Gastrocnemius medialis (tissue), 4 donors: ENCODE measurements at regions of chr2 and their contacts with region 1.

Region 1: GRCh38 chr2:208254871-208255556 is at the start of gene IDH1:
- DNase-seq: peak; percentile 89 to 91
- ATAC-seq: peak; percentile 89 to 91
- H3K4me3 ChIP-seq: peak within 1 kb of the TSS; percentile 63 to 81 (median 70)
- H3K27ac ChIP-seq: peak within 1 kb of the TSS; percentile 82 to 90 (median 86)
- H3K4me1 ChIP-seq: peaks cover 16 to 19% of the 10 kb centered on the region in 2 donors
- H3K27me3 ChIP-seq: no peaks in the 10 kb centered on the region
- CTCF ChIP-seq: peak in 3 of 5 experiments; percentile 19 to 44 (median 25)
- POLR2A ChIP-seq: peak in 1 of 2 donors; percentile 53
- total RNA-seq, gene IDH1: 11.2 to 39.0 (median 15.0) TPM

Region 2: GRCh38 chr2:206765242-206766056 is 1489.6 kb before region 1 on chr2 and contains the starts of genes FASTKD2 and MDH1B:
- in situ Hi-C with region 1: no loop called
- intact Hi-C with region 1: loop called (anchors 5 kb)
- DNase-seq: peak; percentile 83 to 90
- ATAC-seq: peak; percentile 99
- H3K4me3 ChIP-seq: peak within 1 kb of the TSS; percentile 58 to 96 (median 81)
- H3K27ac ChIP-seq: peak within 1 kb of the TSS; percentile 83 to 96 (median 92)
- H3K4me1 ChIP-seq: peaks cover 30 to 43% of the 10 kb centered on the region in 2 donors
- H3K27me3 ChIP-seq: no peaks in the 10 kb centered on the region
- CTCF ChIP-seq: peak in 1 of 5 experiments; percentile 12
- POLR2A ChIP-seq: peak; percentile 57 to 77
- total RNA-seq, gene FASTKD2: 42.9 to 68.6 (median 54.9) TPM
- total RNA-seq, gene MDH1B: 0.13 to 1.6 (median 0.49) TPM

Region 3: DNA sequence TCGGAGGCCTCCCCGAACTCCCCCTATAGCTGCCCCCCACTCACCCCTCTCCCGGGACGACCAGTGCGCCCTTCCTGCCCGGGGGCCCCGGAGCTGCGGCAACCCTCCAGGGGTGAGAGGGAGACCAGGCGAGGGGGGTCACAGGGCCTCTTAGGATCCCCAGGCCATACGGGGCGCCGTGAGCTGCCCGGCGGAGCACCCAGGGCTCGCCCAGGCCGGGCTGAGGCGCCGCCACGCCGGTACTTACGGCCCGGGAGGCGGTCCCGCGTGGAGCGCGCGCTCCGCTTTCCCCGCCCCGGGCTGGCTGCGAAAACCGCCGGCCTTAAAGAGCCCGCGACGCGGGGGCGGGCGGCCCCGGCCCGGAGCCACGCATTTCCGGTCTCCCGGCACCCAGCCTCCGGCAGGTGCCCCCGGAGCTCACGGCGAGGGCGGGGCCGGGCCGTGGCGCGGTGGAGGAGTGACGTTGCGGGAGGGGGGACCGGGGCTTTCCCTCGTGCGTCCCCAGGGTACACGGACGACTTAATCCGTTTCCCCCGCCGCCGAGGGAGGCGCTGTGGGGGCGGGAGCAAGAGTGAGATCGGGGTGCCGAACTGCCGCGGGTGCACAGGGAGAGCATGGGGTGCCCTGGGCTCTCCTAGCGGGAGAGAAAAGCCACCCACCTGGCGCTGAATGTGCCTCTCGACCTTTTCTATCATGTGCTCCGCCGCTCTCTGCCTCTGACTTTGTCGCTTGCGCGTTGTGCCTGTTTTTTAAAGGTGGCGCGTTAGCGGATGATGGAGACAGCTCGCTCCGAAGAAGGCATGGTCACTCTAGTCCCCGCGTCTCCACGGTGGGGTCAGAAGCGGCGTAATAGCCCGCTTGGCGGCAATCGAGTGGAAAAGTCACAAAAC is 629.8 kb before region 1 on chr2 and contains the start of gene METTL21A:
- in situ Hi-C with region 1: loop called in 1 of 4 experiments (anchors 25 kb)
- intact Hi-C with region 1: loop called (anchors 1 kb)
- DNase-seq: peak; percentile 78 to 88
- ATAC-seq: peak; percentile 79 to 81
- H3K4me3 ChIP-seq: peak within 1 kb of the TSS; percentile 74 to 91 (median 86)
- H3K27ac ChIP-seq: peak within 1 kb of the TSS; percentile 91 to 96 (median 93)
- H3K4me1 ChIP-seq: peaks cover 7 to 11% of the 10 kb centered on the region in 2 donors
- H3K27me3 ChIP-seq: no peaks in the 10 kb centered on the region
- CTCF ChIP-seq: peak in 3 of 5 experiments; percentile 33 to 51 (median 48)
- POLR2A ChIP-seq: peak; percentile 73 to 89
- total RNA-seq, gene METTL21A: 9.1 to 20.8 (median 13.9) TPM

Region 4: GRCh38 chr2:208175069-208175839 is 79.8 kb before region 1 on chr2:
- in situ Hi-C with region 1: no loop called
- intact Hi-C with region 1: loop called (anchors 2 kb)
- DNase-seq: peak; percentile 54 to 62
- ATAC-seq: peak; percentile 91 to 95
- H3K4me3 ChIP-seq: no peak overlapping the region
- H3K27ac ChIP-seq: no peak overlapping the region
- H3K4me1 ChIP-seq: peaks cover 0 to 5% of the 10 kb centered on the region in 2 donors
- H3K27me3 ChIP-seq: no peaks in the 10 kb centered on the region
- CTCF ChIP-seq: peak; percentile 24 to 83 (median 54)
- POLR2A ChIP-seq: no peak

Region 5: DNA sequence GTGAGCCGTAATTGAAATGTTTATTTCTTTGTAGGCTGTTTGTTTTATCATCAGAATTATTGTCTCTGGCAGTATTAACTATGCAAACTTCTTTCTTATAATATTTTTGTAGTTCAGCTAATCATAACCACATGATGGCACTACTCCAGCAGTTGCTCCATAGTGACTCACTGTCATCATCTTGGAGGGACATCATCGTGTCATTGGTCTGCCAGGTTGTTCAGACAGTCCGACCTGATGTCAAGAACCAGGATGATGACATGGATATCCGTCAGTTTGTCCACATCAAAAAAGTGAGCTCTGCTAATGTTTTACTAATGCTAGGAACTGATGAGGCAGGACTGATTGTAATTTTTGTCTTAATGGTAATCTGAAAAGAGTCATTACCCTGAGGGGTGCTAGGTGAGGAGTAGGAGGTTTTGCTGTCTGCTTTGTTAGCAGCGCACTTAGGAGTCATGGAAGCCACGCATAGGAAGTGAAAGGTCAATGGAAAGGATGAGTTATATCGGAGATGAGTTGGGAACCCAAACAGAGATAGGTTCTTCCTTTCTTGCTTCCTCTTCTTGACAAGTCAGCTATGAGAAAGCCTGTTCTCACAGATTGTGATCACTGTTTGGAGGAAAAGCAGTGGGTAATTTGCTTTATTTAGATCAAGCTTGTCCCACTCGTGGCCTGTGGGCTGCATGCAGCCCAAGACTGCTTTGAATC is 60.2 kb after region 1 on chr2:
- in situ Hi-C with region 1: no loop called
- intact Hi-C with region 1: loop called (anchors 1 kb)
- DNase-seq: peak; percentile 76 to 85
- ATAC-seq: peak; percentile 99 to 100
- H3K4me3 ChIP-seq: no peak overlapping the region
- H3K27ac ChIP-seq: peak overlapping the region; percentile 72 to 84 (median 79)
- H3K4me1 ChIP-seq: peaks cover 27 to 34% of the 10 kb centered on the region in 2 donors
- H3K27me3 ChIP-seq: no peaks in the 10 kb centered on the region
- CTCF ChIP-seq: no peak
- POLR2A ChIP-seq: no peak